Heart right ventricle (tissue), 16 donors: ENCODE measurements at regions of chr2 and their contacts with region 1.

Region 1: GRCh38 chr2:241803387-241804325 is 5.3 kb upstream of the NEU4 start:
- DNase-seq: peak; percentile 31 to 66
- ATAC-seq: peak; percentile 58 to 82 (median 64)
- H3K4me3 ChIP-seq: peak overlapping the region; percentile 28 to 57 (median 49)
- H3K27ac ChIP-seq: peak overlapping the region in 4 of 10 donors; percentile 16 to 48 (median 32)
- H3K4me1 ChIP-seq: peaks cover 10 to 22% (median 20%) of the 10 kb centered on the region in 9 donors
- H3K27me3 ChIP-seq: peaks cover 0 to 24% (median 20%) of the 10 kb centered on the region in 7 donors
- CTCF ChIP-seq: no peak

Region 2: GRCh38 chr2:241532733-241533601 is 270.7 kb before region 1 on chr2:
- intact Hi-C with region 1: no loop called
- DNase-seq: no peak
- ATAC-seq: peak in 1 of 8 donors; percentile 39
- H3K4me3 ChIP-seq: no peak overlapping the region
- H3K27ac ChIP-seq: no peak overlapping the region
- H3K4me1 ChIP-seq: no peaks in the 10 kb centered on the region
- H3K27me3 ChIP-seq: no peaks in the 10 kb centered on the region
- CTCF ChIP-seq: no peak

Region 3: GRCh38 chr2:241859436-241860183 is 56.0 kb after region 1 on chr2:
- intact Hi-C with region 1: loop called in 2 of 10 experiments (anchors 10 kb)
- DNase-seq: peak; percentile 67 to 73
- ATAC-seq: peak; percentile 53 to 84 (median 71)
- H3K4me3 ChIP-seq: peak overlapping the region in 8 of 10 donors; percentile 27 to 47 (median 42)
- H3K27ac ChIP-seq: peak overlapping the region; percentile 80 to 98 (median 92)
- H3K4me1 ChIP-seq: peaks cover 22 to 41% (median 27%) of the 10 kb centered on the region in 9 donors
- H3K27me3 ChIP-seq: peaks cover 0 to 28% (median 18%) of the 10 kb centered on the region in 7 donors
- CTCF ChIP-seq: peak in 2 of 9 donors; percentile 26 to 35